Activated CD4-positive, alpha-beta memory T cell treated with anti-CD3 and anti-CD28 coated beads, Interleukin-2, amount 10 ng/mL, durations not matched to agents 7 days and 5 days (primary cell): ENCODE measurements at regions of chr1 and their contacts with region 1.

Region 1: GRCh38 chr1:48471691-48472576 is at the start of gene SPATA6:
- DNase-seq: peak; percentile 94
- H3K4me3 Mint-ChIP-seq: peak within 1 kb of the TSS; percentile 73
- H3K27ac Mint-ChIP-seq: peak within 1 kb of the TSS; percentile 26
- H3K4me1 Mint-ChIP-seq: peaks cover 15% of the 10 kb centered on the region
- H3K27me3 Mint-ChIP-seq: peaks cover 23% of the 10 kb centered on the region
- total RNA-seq, gene SPATA6: 0.40 to 0.55 TPM

Region 2: DNA sequence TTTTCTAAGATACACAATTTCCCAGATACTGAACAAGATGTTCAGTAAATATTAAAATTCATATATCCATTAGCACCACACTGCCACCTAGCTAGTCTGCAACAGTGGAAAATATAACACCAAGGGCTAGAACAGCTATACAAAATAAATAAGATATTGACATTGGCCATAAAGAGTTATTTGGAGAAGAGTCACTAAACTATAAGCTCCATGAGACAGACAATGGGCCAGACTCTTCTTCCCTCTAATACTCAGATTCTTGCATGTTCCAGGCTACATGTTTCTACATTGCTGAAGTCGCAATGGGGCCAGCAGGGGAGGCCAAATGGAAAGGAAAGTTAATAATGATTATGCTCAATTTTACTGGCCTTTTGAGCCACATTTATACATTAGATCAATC is 21.4 kb before region 1 on chr1:
- CTCF ChIA-PET with region 1: no interaction called
- POLR2A ChIA-PET with region 1: no interaction called
- DNase-seq: no peak
- H3K4me3 Mint-ChIP-seq: no peak overlapping the region
- H3K27ac Mint-ChIP-seq: no peak overlapping the region
- H3K4me1 Mint-ChIP-seq: no peaks in the 10 kb centered on the region
- H3K27me3 Mint-ChIP-seq: peaks cover 1% of the 10 kb centered on the region

Region 3: DNA sequence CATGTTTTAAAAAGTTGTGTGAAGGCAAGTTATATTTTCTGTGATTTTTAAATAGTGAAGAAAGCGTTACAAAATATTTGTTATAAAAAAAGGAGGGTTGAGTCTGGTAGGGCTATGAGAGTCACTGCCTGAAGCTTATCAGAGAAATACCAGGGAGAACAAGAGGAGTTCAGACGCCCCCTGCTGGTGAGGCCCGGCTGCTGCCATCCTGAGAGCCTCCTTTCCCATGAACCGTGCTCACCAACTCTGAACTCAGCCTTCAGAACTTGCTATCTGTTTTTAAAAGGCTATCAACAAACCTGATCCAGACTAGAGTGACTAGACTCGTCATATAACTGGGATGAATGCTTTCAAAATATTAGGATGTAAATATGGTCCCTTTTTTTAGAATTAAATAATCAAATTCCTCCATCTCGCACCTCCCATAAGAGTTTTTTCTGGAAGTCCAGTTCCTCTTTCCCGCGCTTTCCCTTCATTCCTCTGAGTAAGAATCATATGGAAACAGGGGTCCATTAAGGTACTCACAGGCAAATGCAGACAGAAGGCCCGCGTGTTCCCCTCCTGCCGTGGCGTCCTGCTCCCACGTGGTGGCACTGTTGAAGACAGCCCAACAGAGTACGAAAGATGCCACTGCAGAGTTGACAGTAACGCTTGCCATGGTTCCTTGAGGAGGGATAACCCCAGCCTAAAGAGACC is 26.3 kb after region 1 on chr1:
- CTCF ChIA-PET with region 1: interaction called, 21 read pairs
- POLR2A ChIA-PET with region 1: no interaction called
- DNase-seq: peak; percentile 66
- H3K4me3 Mint-ChIP-seq: no peak overlapping the region
- H3K27ac Mint-ChIP-seq: no peak overlapping the region
- H3K4me1 Mint-ChIP-seq: peaks cover 1% of the 10 kb centered on the region
- H3K27me3 Mint-ChIP-seq: no peaks in the 10 kb centered on the region